Spleen (tissue), 13 donors: ENCODE measurements at regions of chr11 and their contacts with region 1.

Region 1: DNA sequence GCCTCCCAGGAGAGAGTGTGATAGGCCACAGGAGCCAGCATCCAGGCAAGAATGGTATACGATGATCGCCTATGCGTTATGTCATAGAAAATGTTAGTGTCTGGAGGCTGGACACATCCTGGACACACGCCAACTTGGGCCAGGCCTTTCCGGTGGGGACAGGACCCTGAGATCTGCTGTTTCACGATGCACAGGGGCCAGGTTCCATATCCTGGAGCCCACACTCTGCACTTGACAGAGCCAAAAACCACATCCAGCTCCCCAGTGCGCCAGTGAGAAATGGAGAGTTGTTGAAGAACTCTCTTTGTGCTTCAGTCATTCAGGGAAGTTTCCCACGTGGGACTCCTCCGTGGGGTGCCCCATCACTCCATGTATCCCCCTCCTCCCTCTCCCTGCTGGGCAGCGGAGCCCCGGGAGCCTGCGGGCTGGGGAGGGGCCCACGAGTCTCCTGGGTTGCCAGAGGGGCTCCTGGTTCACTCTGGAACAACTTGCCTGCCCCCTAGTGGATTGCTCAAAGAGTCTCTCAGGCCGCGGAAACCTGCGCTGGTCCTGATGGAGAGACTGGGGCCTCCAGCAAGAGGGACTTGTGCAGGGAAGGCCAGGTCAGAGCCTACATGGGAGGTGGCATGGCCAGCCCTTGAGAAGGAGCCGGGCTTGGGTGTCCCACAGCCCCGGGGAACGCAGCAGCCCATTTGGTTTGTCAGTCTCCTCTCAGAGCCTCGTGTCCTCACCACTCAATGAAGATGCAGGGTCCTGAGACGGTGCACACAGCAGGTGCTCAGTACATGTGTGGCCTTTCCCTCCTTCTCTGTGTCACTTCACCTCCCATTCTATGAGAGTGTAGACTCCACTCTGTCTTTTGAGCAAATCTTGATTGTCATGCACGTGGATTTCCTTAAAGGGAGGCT is 10.2 kb upstream of the LRRC32 start:
- DNase-seq: peak; percentile 85
- H3K4me3 ChIP-seq: no peak overlapping the region
- H3K27ac ChIP-seq: no peak overlapping the region
- H3K4me1 ChIP-seq: peaks cover 5 to 44% (median 17%) of the 10 kb centered on the region in 6 donors
- H3K27me3 ChIP-seq: peaks cover 0 to 46% (median 0%) of the 10 kb centered on the region in 7 donors
- CTCF ChIP-seq: peak; percentile 54 to 88 (median 76)
- POLR2A ChIP-seq: no peak

Region 2: DNA sequence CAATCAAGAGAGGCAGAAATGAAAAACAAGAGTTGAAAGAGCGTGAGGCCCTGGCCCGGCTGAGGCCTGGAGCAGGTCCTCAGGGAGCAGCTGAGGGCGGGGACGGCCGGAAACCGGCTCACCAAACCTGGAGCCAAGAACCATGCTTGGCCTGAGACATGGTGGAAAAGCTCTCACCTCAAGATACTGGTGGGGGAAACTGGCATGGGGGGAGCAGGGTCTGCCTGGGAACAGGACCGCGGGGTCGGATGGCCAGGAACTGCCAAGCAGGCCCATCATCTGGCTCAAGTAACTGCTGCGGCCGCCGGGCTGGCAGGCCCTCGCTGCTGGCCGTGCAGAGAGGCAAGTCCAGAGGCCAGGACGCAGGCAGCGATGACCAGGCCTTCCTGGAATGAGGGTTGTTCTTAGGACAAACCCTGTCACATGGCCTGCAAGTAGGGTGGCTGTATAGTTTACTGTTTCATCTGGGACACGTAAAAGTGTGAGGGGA is 455.6 kb before region 1 on chr11:
- intact Hi-C with region 1: loop called (anchors 10 kb)
- DNase-seq: no peak
- H3K4me3 ChIP-seq: no peak overlapping the region
- H3K27ac ChIP-seq: no peak overlapping the region
- H3K4me1 ChIP-seq: peaks cover 0 to 6% (median 0%) of the 10 kb centered on the region in 6 donors
- H3K27me3 ChIP-seq: no peaks in the 10 kb centered on the region
- CTCF ChIP-seq: no peak
- POLR2A ChIP-seq: no peak

Region 3: GRCh38 chr11:76551400-76551799 is 129.4 kb before region 1 on chr11:
- intact Hi-C with region 1: loop called (anchors 5 kb)
- DNase-seq: no peak
- H3K4me3 ChIP-seq: no peak overlapping the region
- H3K27ac ChIP-seq: no peak overlapping the region
- H3K4me1 ChIP-seq: peaks cover 0 to 17% (median 1%) of the 10 kb centered on the region in 6 donors
- H3K27me3 ChIP-seq: no peaks in the 10 kb centered on the region
- CTCF ChIP-seq: peak in 6 of 11 experiments; percentile 20 to 57 (median 28)
- POLR2A ChIP-seq: no peak